A549 (cell line): ENCODE measurements at regions of chr1 and their contacts with region 1.

Region 1: GRCh38 chr1:32107742-32108661 is at the start of gene KPNA6:
- DNase-seq: peak; percentile 67 to 96
- ATAC-seq: peak; percentile 83 to 85
- H3K4me3 ChIP-seq: peak within 1 kb of the TSS; percentile 62
- H3K27ac ChIP-seq: peak within 1 kb of the TSS; percentile 80 to 97
- H3K4me1 ChIP-seq: peaks cover 7% of the 10 kb centered on the region; the same call in 1 of the 3 replicates
- CTCF ChIP-seq: no peak
- EP300 ChIP-seq: no peak
- POLR2A ChIP-seq: peak; percentile 28
- RAD21 ChIP-seq: no peak
- polyA plus RNA-seq, gene KPNA6: 24.3 and 41.9 TPM in 2 replicates

Region 2: DNA sequence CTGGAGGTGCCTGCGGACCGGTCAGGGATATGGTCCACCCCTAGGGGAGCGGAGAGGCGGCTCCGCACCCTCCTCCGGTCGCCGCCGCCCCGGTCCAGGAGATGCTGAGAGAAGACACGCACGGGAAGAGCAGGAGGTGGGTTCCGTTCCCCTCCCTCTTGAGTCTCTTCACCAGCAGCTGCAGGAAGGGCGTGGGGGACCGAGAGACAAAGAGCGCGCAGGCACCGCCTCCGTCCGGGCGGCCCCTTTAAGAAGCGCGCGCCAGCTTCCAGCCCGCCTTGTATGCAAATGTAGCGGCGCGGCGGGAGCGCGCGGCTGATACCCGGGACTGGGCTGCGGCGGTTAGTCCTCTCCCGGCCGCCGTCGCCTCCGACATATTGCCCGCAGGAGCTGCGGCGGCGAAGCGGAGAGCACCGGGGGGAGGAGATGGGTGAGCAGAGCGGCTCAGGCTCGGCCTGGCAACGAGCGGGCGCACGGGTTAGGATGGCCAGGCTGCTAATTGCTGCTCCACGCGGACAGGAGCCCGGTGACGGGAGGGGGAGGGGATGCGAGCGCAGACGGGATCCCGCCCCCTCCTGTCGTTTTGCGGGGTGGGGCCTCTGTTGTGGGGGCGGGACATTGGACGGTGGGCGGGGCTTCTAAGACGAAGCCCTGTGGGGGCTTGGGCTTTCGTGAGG is 35.2 kb before region 1 on chr1 and contains the start of gene TMEM39B:
- CTCF ChIA-PET with region 1: interaction called, 6 read pairs
- POLR2A ChIA-PET with region 1: interaction called, 25 read pairs
- DNase-seq: peak; percentile 82 to 93
- ATAC-seq: peak; percentile 90 to 93
- H3K4me3 ChIP-seq: peak within 1 kb of the TSS; percentile 67
- H3K27ac ChIP-seq: peak within 1 kb of the TSS; percentile 94 to 98
- H3K4me1 ChIP-seq: peaks cover 16% of the 10 kb centered on the region
- CTCF ChIP-seq: no peak
- EP300 ChIP-seq: no peak
- POLR2A ChIP-seq: peak; percentile 46
- RAD21 ChIP-seq: no peak
- polyA plus RNA-seq, gene TMEM39B: 10.8 and 13.8 TPM in 2 replicates

Region 3: DNA sequence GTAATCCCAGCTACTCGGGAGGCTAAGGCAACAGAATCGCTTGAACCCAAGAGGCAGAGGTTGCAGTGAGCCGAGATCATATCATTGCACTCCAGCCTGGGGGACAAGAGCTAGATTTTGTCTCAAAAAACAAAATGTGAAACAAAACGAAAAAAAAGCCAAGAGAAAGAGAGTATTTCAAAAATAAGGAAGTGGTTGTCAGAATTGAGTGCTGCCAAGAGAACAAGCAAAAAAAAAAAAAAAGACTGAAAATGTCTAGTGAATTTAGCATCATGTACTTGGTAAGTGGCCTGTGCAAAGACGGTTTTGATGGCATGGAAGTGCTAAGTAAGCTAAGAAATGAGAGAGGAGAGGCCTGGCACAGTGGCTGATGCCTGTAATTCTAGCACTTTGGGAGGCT is 14.1 kb after region 1 on chr1:
- CTCF ChIA-PET with region 1: interaction called, 17 read pairs
- POLR2A ChIA-PET with region 1: interaction called, 5 read pairs
- DNase-seq: no peak
- ATAC-seq: no peak
- H3K4me3 ChIP-seq: no peak overlapping the region
- H3K27ac ChIP-seq: no peak overlapping the region
- H3K4me1 ChIP-seq: peaks cover 10% of the 10 kb centered on the region; the same call in 2 of the 3 replicates
- CTCF ChIP-seq: no peak
- EP300 ChIP-seq: no peak
- POLR2A ChIP-seq: no peak
- RAD21 ChIP-seq: no peak

Region 4: GRCh38 chr1:32291708-32292492 is 183.9 kb after region 1 on chr1 and contains the start of gene HDAC1:
- CTCF ChIA-PET with region 1: no interaction called
- POLR2A ChIA-PET with region 1: no interaction called
- DNase-seq: peak; percentile 88 to 94
- ATAC-seq: peak; percentile 97 to 98
- H3K4me3 ChIP-seq: peak within 1 kb of the TSS; percentile 90
- H3K27ac ChIP-seq: peak within 1 kb of the TSS; percentile 92 to 95
- H3K4me1 ChIP-seq: peaks cover 22% of the 10 kb centered on the region
- CTCF ChIP-seq: no peak
- EP300 ChIP-seq: no peak
- POLR2A ChIP-seq: peak; percentile 69
- RAD21 ChIP-seq: no peak
- polyA plus RNA-seq, gene HDAC1: 135 TPM in 2 replicates